OCI-LY7 (cell line): ENCODE measurements at regions of chr2 and their contacts with region 1.

Region 1: GRCh38 chr2:115609978-115610377 is 1167.5 kb downstream of the DPP10 start:
- DNase-seq: no peak
- H3K4me3 ChIP-seq: no peak overlapping the region
- H3K27ac ChIP-seq: no peak overlapping the region
- H3K4me1 ChIP-seq: no peaks in the 10 kb centered on the region
- CTCF ChIP-seq: no peak

Region 2: DNA sequence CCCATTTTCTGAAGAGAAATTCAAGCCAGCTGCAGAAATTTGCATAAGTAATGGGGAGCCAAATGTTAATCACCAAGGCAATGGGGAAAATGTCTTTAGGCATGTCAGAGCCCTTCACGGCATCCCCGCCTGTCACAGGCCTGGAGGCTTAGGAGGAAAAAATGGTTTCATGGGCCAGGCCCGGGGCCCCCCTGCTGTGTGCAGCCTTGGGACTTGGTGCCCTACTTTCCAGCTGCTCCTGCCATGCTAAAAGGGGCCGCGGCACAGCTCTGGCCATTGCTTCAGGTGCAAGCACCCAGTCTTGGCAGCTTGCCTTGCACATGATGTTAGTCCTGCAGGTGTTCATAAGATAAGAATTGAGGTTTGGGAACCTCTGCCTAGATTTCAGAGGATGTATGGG is 68.2 kb after region 1 on chr2:
- CTCF ChIA-PET with region 1: no interaction called
- POLR2A ChIA-PET with region 1: no interaction called
- intact Hi-C with region 1: loop called (anchors 2 kb)
- DNase-seq: no peak
- H3K4me3 ChIP-seq: no peak overlapping the region
- H3K27ac ChIP-seq: no peak overlapping the region
- H3K4me1 ChIP-seq: no peaks in the 10 kb centered on the region
- CTCF ChIP-seq: no peak